Activated T-helper 1 cell treated with anti-CD3 and anti-CD28 coated beads, Interleukin-12 subunit alpha, Interleukin-12 subunit beta, Interleukin-2, Interleukin-4 antibody, amounts not matched to agents 30 ng/mL and 10 ng/mL and 1 ng/mL, durations not matched to agents 14 hours and 24 hours and 36 hours (primary cell): ENCODE measurements at regions of chr22 and their contacts with region 1.

Region 1: DNA sequence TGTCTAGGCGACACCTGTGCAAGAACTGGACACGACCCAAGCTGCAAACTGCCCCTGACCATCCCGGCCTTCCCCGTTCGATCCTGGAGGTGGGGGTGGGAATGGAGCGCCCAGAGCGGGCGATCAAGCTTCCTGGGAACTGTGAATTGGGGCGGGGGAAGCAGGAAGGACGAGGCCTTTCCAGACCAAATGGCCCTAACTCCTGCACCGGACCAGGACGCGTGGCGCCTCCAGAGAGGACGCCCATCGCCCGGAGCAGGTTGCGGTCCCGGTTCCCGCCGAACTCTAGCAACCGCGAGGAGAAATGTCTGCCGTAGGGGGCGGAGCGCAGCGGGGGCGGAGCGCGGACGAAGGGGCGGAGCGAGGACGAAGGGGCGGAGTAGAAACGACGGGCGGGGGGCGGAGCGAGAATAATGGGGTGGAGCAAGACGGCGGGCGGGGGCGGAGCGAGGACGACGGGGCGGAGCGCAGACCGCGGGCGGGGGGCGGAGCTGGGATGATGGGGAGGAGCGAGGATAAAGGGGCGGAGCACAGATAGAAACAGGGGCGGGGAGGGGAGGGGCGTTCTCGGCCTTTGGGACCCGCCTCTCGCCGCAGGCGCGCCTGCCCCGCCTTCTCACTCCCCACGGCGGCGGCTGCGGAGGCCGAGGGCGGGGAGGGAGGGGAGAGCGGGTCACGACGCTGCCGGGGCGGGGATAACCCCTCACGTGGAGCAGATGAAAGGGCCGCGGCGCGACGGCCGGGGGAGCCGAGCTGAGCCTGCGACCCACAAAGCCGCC is at the start of gene ZNRF3:
- DNase-seq: peak; percentile 78
- H3K4me3 Mint-ChIP-seq: peak within 1 kb of the TSS; percentile 79
- H3K27ac Mint-ChIP-seq: no peak within 1 kb of the TSS
- H3K4me1 Mint-ChIP-seq: peaks cover 14% of the 10 kb centered on the region
- H3K27me3 Mint-ChIP-seq: peaks cover 67% of the 10 kb centered on the region
- total RNA-seq, gene ZNRF3: 1.9 and 2.1 TPM in 2 replicates

Region 2: DNA sequence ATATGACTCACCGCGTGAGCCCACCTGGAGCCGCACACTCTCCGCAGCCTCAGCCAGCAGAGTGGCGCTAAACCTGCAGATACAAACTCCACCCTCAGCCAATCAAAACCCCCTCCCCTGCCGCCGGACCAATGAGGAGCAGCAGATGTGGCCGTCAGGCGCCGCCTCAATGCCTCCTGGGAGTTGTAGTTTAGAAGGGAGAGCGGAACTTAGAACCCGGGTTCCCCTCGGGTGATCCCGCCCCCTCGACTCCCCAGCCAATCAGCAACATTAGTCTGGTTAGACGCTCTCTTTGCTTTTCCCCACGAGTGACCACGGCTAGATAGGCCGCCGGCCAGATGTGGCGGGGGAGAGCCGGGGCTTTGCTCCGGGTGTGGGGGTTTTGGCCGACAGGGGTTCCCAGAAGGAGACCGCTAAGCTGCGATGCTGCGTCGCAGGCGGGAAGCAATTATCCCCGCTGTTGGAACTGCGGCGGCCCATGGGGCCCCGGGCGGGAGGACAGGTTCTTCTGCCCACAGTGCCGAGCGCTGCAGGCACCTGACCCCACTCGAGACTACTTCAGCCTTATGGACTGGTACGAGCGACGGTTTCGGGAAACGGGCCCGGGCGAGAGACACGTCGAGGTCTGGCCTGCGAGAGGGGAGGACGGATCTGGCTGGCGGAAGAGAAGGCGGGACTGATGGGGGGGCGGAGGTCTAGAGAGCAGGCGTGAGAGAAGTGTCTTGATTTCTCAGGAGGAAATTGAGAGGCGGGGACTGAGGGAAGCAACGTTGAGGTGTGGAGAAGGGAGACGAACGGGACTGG is 141.1 kb before region 1 on chr22 and contains the starts of genes CHEK2 and HSCB:
- intact Hi-C with region 1: loop called (anchors 1 kb)
- DNase-seq: peak; percentile 97
- H3K4me3 Mint-ChIP-seq: peak within 1 kb of the TSS; percentile 86
- H3K27ac Mint-ChIP-seq: peak within 1 kb of the TSS; percentile 70
- H3K4me1 Mint-ChIP-seq: peaks cover 42% of the 10 kb centered on the region
- H3K27me3 Mint-ChIP-seq: no peaks in the 10 kb centered on the region
- total RNA-seq, gene CHEK2: 31.4 and 35.0 TPM in 2 replicates
- total RNA-seq, gene HSCB: 16.6 and 18.0 TPM in 2 replicates

Region 3: DNA sequence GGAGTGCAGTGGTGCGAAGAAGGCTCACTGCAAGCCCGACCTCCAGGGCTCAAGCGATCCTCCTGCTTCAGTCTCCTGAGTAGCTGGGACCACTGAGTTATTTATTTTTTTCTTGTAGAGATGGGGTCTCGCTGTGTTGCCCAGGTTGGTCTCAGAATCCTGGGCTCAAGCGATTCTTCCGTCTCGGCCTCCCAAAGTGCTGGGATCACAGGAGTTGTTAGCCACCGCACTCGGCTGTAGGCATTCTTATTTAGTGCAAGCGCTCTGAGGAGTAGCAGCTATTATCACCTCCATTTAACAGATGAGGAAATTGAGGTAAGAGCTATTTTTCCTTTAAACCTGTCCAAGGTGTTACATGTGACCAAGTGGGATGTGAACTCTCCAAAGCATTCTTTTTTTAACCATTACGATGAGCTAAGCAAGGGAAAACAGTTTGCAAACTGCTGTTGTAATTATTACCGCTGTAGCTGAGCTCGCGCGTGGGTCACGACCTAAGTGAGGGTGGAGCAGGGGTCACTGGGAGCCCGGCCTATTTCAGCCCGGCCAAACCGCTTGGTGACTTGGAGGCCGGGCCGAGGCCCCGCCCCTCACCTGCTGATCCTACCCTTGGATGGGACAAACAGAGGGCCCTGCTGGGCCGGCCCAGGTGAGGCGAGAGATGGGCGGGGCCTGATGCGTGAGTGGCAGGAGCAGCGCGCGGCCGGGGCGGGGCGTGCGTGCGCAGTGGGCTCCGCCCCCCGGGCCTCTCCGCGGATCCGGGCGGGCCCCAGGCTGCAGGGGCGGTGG is 189.3 kb after region 1 on chr22:
- intact Hi-C with region 1: loop called (anchors 1 kb)
- DNase-seq: peak; percentile 77
- H3K4me3 Mint-ChIP-seq: peak overlapping the region; percentile 68
- H3K27ac Mint-ChIP-seq: no peak overlapping the region
- H3K4me1 Mint-ChIP-seq: peaks cover 18% of the 10 kb centered on the region
- H3K27me3 Mint-ChIP-seq: peaks cover 65% of the 10 kb centered on the region

Region 4: DNA sequence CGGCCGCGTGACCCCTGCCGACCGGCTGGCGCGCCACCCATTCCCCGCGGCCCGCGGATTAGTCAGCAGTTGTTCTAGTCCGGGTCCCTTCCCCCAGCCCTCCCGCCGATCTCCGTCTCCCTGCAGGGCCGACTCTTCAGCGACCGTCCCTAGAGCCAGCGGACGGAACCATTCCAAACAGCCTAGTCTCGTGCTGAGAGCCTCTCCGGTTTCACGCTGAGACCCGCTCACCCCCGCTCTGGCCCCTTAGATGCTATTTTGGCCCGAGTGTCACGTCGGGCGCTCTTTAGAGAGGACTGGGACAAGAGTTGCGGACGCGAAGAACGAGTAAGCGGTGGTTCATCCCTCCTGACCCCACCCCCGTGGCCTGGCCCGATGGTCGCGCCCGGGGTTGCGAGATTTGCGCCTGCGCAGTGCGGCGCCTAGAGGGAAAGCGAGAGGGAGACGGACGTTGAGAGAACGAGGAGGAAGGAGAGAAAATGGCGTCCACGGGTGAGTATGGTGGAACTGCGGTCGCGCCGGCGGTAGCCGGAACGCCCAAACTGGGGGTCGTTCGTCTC is 384.9 kb after region 1 on chr22 and contains the starts of genes EWSR1 and RHBDD3:
- intact Hi-C with region 1: loop called (anchors 10 kb)
- DNase-seq: peak; percentile 97
- H3K4me3 Mint-ChIP-seq: peak within 1 kb of the TSS; percentile 96
- H3K27ac Mint-ChIP-seq: peak within 1 kb of the TSS; percentile 99
- H3K4me1 Mint-ChIP-seq: peaks cover 49% of the 10 kb centered on the region
- H3K27me3 Mint-ChIP-seq: no peaks in the 10 kb centered on the region
- total RNA-seq, gene EWSR1: 454 and 463 TPM in 2 replicates
- total RNA-seq, gene RHBDD3: 53.3 and 59.4 TPM in 2 replicates